ENCODE measurements at regions of chr21 and their contacts with region 1.

Region 1: GRCh38 chr21:42892931-42893755 is at the start of gene NDUFV3:
- DNase-seq: peak; percentile 99
- H3K4me3 Mint-ChIP-seq: peak within 1 kb of the TSS; percentile 96
- H3K27ac Mint-ChIP-seq: peak within 1 kb of the TSS; percentile 98
- H3K4me1 Mint-ChIP-seq: peaks cover 8% of the 10 kb centered on the region
- H3K27me3 Mint-ChIP-seq: no peaks in the 10 kb centered on the region
- total RNA-seq, gene NDUFV3: 41.2 and 41.7 TPM in 2 replicates

Region 2: GRCh38 chr21:42878993-42879787 is 14.0 kb before region 1 on chr21 and contains the start of gene WDR4:
- intact Hi-C with region 1: loop called (anchors 1 kb)
- DNase-seq: peak; percentile 100
- H3K4me3 Mint-ChIP-seq: peak within 1 kb of the TSS; percentile 97
- H3K27ac Mint-ChIP-seq: peak within 1 kb of the TSS; percentile 96
- H3K4me1 Mint-ChIP-seq: peaks cover 20% of the 10 kb centered on the region
- H3K27me3 Mint-ChIP-seq: peaks cover 2% of the 10 kb centered on the region
- total RNA-seq, gene WDR4: 73.5 and 75.1 TPM in 2 replicates

Region 3: GRCh38 chr21:42973991-42974831 is 81.1 kb after region 1 on chr21 and contains the start of gene PKNOX1:
- intact Hi-C with region 1: loop called (anchors 1 kb)
- DNase-seq: peak; percentile 100
- H3K4me3 Mint-ChIP-seq: peak within 1 kb of the TSS; percentile 90
- H3K27ac Mint-ChIP-seq: peak within 1 kb of the TSS; percentile 94
- H3K4me1 Mint-ChIP-seq: peaks cover 26% of the 10 kb centered on the region
- H3K27me3 Mint-ChIP-seq: no peaks in the 10 kb centered on the region
- total RNA-seq, gene PKNOX1: 23.1 and 26.2 TPM in 2 replicates

Region 4: DNA sequence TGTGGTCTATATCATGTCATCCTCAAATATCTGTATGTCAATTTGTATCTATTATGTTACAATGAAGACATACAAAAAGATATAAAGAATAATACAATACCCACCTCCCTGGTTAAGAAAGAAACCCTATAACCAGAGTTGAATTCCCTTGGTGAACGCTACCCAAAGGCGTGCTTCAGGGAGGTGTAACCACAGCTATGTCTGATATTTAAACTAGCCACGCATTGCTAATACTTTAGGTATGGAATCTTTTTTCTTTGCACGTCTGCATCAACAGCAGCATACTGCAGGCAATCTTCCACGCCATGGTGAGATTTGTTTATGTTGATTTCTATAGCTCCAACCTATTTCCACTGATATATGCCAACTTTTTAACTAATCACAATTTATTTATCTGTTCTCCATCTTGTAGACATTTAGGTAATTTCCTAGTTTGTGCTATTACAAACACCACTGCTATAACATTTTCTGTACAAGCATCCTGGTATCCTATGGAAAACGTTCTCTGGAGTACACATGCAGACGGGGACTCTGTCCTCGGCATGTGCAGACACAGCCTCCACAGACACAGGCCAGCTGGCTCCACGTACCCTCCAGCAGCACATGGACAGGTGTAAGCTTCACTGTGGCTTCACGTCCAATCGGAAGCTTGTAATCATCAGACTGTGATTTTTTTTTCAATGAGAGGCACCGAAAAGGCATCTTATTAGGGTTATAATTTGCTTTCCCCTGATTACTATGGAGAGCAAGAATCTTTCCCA is 707.7 kb after region 1 on chr21:
- intact Hi-C with region 1: no loop called
- DNase-seq: no peak
- H3K4me3 Mint-ChIP-seq: no peak overlapping the region
- H3K27ac Mint-ChIP-seq: no peak overlapping the region
- H3K4me1 Mint-ChIP-seq: peaks cover 10% of the 10 kb centered on the region
- H3K27me3 Mint-ChIP-seq: peaks cover 5% of the 10 kb centered on the region